ENCODE measurements at regions of chr20 and their contacts with region 1.

Region 1: DNA sequence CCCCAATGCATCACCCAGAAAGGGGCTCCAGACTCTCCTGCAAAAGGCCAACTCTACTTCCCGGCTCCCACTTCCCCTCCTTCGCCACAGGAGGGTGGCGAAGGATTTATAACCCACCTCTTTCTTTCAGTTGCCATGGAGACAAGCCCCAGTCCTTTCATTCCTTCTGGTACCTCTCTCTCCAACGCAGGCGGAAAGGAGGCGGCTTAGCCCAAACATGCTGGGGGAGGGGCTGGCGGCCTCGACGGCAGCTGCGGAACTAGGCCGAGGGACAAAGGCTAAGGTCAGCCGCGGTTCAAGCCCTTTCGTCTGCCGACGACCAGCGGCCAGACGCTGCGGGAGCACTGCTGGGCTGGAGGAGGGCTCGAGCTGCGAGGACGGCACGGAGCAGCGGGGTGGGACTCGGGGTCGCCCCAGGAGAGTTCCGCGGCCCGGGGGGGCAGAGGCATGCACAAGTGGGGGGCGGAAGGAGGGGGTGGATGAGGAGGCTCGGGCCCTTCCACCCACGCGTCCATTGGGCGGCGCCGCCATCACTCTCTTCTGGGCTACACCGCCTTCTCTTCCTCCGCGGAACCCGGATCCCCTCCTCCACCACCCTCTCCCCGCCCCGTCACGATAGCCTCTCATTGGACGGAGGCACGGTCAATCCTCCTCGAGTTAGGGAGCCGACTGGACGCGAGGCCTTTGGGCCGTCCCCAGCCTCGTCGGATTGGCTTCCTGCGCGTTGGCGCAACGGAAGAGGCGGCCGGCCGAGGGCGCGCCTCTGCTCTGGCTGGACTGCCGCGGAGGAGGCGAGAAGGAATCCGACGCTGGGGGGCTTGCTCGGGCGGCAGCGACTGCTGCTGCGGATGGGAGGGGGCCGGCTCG is at the start of gene PANK2:
- DNase-seq: peak; percentile 100
- H3K4me3 Mint-ChIP-seq: peak within 1 kb of the TSS; percentile 98
- H3K27ac Mint-ChIP-seq: peak within 1 kb of the TSS; percentile 96
- H3K4me1 Mint-ChIP-seq: peaks cover 42% of the 10 kb centered on the region
- H3K27me3 Mint-ChIP-seq: no peaks in the 10 kb centered on the region
- total RNA-seq, gene PANK2: 39.8 to 44.7 TPM

Region 2: GRCh38 chr20:3606021-3606420 is 282.8 kb before region 1 on chr20:
- CTCF ChIA-PET with region 1: no interaction called
- intact Hi-C with region 1: no loop called
- DNase-seq: no peak
- H3K4me3 Mint-ChIP-seq: no peak overlapping the region
- H3K27ac Mint-ChIP-seq: no peak overlapping the region
- H3K4me1 Mint-ChIP-seq: peaks cover 3% of the 10 kb centered on the region
- H3K27me3 Mint-ChIP-seq: no peaks in the 10 kb centered on the region

Region 3: DNA sequence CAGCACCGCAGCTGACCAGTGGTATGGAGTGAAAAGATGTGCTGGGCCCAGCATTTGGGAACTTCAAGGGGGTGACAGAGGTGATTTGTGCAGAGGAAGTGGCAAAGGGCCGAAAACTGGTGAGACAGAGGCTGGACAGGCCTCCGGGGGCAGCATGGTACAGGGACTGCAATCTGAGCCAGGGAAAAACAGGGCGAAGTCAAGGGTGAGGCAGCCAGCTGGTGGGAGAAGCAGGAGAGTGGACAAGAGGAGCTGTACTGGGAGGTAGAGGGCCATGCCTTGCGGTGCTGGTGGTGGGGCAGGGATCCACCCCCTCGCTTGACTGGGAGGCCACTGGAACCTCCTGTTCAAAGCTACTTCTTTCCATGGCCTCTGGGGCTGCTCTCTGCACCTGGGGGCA is 218.3 kb before region 1 on chr20:
- CTCF ChIA-PET with region 1: no interaction called
- intact Hi-C with region 1: no loop called
- DNase-seq: no peak
- H3K4me3 Mint-ChIP-seq: no peak overlapping the region
- H3K27ac Mint-ChIP-seq: no peak overlapping the region
- H3K4me1 Mint-ChIP-seq: peaks cover 14% of the 10 kb centered on the region
- H3K27me3 Mint-ChIP-seq: peaks cover 30% of the 10 kb centered on the region

Region 4: DNA sequence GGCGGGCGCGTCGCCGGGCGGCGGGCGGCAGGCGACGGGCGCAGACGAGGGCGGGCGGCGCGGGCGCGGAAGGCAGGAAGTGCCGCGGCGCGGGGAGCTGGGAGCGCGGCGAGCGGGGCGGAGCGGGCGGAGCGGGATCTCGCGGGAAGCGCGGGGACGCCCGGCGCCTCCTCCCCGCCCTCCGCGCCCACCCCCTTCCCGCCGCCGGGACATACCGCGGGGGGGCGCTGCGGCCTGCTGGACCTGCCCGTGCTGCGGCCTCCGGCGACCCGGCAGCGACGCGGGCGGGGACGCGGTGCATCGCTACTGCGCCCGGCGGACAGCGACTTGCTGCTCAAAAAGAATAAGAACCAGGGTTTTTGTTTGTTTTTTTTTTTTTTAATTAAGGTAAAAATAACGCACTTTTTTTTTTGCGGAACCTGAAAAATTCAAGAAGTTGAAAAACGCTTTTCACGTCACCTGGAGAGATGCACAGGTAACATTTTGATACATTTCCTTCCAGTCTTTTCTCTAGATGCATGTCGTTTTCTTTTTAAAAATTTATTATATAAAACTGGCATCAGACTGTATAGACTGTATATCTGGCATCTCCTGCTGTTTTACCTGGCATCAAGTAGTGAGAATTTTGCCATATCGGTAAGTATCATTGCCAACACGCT is 102.1 kb before region 1 on chr20 and contains the start of gene CENPB:
- CTCF ChIA-PET with region 1: no interaction called
- intact Hi-C with region 1: loop called (anchors 2 kb)
- DNase-seq: peak; percentile 91
- H3K4me3 Mint-ChIP-seq: peak within 1 kb of the TSS; percentile 83
- H3K27ac Mint-ChIP-seq: peak within 1 kb of the TSS; percentile 80
- H3K4me1 Mint-ChIP-seq: peaks cover 39% of the 10 kb centered on the region
- H3K27me3 Mint-ChIP-seq: no peaks in the 10 kb centered on the region
- total RNA-seq, gene CENPB: 29.1 to 30.3 TPM

Region 5: GRCh38 chr20:3820048-3820900 is 68.6 kb before region 1 on chr20 and contains the start of gene AP5S1:
- CTCF ChIA-PET with region 1: interaction called, 3 read pairs
- intact Hi-C with region 1: loop called (anchors 2 kb)
- DNase-seq: peak; percentile 96
- H3K4me3 Mint-ChIP-seq: peak within 1 kb of the TSS; percentile 85
- H3K27ac Mint-ChIP-seq: peak within 1 kb of the TSS; percentile 94
- H3K4me1 Mint-ChIP-seq: peaks cover 36% of the 10 kb centered on the region
- H3K27me3 Mint-ChIP-seq: no peaks in the 10 kb centered on the region
- total RNA-seq, gene AP5S1: 8.0 to 8.2 TPM

Region 6: GRCh38 chr20:3871550-3872297 is 17.1 kb before region 1 on chr20:
- CTCF ChIA-PET with region 1: no interaction called
- intact Hi-C with region 1: no loop called
- DNase-seq: no peak
- H3K4me3 Mint-ChIP-seq: no peak overlapping the region
- H3K27ac Mint-ChIP-seq: no peak overlapping the region
- H3K4me1 Mint-ChIP-seq: peaks cover 7% of the 10 kb centered on the region
- H3K27me3 Mint-ChIP-seq: no peaks in the 10 kb centered on the region

Region 7: GRCh38 chr20:3911956-3912355 is 23.1 kb after region 1 on chr20:
- CTCF ChIA-PET with region 1: interaction called, 4 read pairs
- intact Hi-C with region 1: loop called (anchors 1 kb)
- DNase-seq: no peak
- H3K4me3 Mint-ChIP-seq: no peak overlapping the region
- H3K27ac Mint-ChIP-seq: peak overlapping the region; percentile 39
- H3K4me1 Mint-ChIP-seq: peaks cover 61% of the 10 kb centered on the region
- H3K27me3 Mint-ChIP-seq: no peaks in the 10 kb centered on the region

Region 8: GRCh38 chr20:4014031-4014474 is 125.2 kb after region 1 on chr20:
- CTCF ChIA-PET with region 1: no interaction called
- intact Hi-C with region 1: loop called (anchors 1 kb)
- DNase-seq: peak; percentile 52
- H3K4me3 Mint-ChIP-seq: peak overlapping the region; percentile 81
- H3K27ac Mint-ChIP-seq: no peak overlapping the region
- H3K4me1 Mint-ChIP-seq: peaks cover 32% of the 10 kb centered on the region
- H3K27me3 Mint-ChIP-seq: no peaks in the 10 kb centered on the region

Region 9: DNA sequence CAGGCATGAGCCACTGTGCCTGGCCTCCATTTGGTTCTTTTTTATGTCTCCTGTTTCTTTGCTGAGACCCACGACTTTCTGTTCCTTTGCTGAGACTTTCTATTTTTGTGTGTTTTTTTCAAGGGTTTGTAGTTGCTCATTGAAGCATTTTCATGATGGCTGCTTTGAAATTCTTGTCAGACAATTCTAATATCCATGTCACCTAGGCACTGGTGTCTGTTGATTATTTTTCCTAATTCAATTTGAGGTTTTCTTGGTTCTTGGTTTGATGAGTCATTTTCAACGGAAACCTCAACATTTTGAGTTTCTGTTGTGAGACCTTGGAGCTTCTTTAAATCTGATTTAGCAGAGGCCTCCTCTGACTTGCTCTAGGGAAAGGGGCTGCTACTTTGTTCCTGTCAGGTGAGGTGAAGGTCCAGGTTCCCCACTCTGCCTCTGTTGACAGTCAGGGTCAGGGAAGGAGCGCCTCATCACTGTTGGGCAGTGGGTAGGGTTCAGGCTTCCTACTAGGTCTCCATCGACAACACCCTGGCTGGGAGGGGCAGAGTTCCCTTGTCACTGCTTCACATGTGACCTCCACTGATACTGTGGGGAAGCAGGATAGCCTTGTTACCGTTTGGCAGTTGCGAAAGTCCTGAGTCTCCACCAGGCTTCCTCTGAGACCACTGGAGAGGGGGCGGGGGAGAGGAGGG is 193.7 kb after region 1 on chr20:
- CTCF ChIA-PET with region 1: interaction called, 5 read pairs
- intact Hi-C with region 1: loop called (anchors 1 kb)
- DNase-seq: peak; percentile 67
- H3K4me3 Mint-ChIP-seq: peak overlapping the region; percentile 57
- H3K27ac Mint-ChIP-seq: peak overlapping the region; percentile 91
- H3K4me1 Mint-ChIP-seq: peaks cover 44% of the 10 kb centered on the region
- H3K27me3 Mint-ChIP-seq: peaks cover 4% of the 10 kb centered on the region

Measured in activated naive CD4-positive, alpha-beta T cell treated with anti-CD3 and anti-CD28 coated beads for 36 hours (primary cell).